Posterior vena cava (tissue), 2 donors: ENCODE measurements at regions of chr1 and their contacts with region 1.

Region 1: DNA sequence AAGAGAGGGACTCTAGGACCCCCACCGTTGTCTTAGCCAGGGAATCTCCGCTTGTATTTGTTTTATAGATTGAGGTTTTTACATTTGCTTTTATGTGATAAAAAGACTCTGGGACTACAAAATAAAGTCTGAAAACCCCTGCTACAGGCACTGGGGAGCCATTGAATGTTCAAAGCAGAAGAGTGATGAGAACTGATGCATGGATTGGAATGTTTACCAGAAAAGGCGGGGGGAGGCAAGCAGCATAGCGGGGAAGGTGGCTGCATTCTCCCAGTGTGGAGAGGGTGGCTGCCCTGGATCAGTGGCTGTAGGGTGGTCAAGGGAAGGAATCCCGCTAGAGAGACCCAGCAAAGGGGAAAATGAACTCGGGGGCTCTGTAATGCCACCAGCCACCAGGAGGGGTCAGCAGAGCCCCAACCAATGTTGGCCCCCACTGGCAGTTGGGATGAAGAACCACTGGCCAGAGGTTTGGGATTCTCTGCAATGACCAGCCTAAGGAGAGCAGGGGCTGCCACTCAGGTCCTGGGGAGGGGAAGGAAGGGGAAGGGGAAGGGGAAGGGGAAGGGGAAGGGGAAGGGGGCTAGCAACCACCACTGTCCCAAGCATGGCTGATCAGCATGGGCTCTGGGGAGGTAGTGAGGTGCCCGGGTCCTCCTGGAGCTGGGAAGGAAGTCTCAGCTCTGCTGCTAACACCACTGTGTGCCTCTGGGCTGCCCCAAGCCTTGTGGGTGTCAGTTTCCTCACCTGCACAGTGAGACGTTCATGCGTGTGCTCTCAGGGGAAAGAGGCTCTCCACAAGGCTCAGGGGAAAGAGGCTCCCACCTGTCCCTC is 19.2 kb upstream of the PEF1 start:
- DNase-seq: no peak

Region 2: DNA sequence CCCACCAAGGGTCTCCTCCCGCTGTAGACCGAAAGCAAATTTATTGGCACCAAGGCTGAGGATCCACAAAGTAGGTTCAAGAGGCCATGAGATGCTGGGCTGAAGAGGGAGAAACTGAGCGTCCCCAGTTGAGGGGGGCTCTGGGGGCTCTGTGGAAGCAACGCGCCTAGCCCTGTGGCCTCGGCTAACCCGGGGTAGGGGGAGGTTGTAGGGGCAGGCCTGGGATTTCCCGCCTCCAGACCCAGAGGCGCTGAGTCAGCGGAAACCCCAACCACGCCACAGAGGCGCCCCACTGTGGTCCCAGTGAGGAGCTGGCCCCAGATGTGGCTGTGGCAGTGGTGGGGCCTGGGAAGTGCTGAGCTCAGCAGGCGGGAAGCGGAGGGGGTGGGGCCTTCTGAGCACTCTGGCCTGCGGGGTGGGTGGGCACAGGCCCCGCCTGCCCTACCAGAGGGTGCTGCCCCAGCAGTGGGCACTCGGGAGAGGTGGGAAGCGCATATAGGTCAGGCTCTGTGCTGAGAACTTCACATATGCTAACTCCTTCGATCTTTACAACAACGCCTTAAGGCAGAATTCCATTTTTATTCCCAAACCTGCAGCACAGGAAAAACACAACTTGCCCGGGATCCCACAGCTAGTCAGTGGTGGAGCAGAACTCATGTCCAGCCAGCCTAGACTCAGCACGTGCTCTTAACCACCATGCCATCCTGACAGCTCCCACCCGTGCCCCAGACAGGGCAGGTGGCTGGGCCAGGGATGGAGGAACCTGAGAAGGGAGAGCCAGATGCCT is 41.4 kb after region 1 on chr1:
- intact Hi-C with region 1: loop called (anchors 5 kb)
- DNase-seq: peak; percentile 93

Region 3: GRCh38 chr1:32151319-32151787 is 487.5 kb after region 1 on chr1:
- intact Hi-C with region 1: no loop called
- DNase-seq: no peak